ENCODE measurements at regions of chr21 and their contacts with region 1.

Region 1: DNA sequence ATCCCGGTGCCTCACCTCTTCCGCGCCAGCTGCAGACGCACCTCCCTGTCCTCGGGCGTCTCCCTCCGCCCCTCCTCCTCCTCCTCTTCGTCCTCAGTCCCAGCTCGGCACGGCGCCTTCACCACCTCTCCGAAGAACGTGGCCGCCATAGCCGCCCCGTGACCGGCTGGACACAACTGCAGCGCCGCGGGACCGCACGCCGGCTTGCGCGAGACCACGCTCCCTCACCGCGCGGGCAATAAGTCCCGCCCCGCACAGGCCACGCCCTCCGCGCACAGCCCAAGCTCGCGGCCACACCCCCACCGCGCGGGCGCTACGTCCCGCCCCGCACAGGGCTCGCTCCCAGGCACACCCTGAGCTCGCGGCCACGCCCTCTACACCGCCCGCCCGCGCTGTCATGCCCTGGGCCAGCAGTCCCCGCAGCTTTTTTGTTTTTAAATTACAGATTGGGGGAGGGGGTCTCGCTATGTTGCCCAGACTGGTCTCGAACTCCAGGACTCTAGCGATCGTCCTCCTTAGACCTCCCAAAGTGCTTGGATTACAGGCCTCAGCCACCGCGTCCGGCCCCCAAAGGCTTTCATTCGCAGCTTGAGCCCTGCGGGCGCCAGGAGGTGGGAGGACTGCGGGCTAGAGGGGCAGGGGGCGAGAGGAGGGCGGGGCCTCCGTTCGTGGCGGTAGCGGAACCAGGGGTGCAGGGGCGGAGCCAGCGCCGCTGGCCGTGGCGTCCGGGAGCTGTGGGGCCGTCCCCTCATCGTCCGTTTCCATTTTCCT is at the start of gene PSMG1:
- DNase-seq: peak; percentile 90
- CTCF ChIP-seq: no peak

Region 2: GRCh38 chr21:39388038-39388810 is 204.8 kb after region 1 on chr21:
- in situ Hi-C with region 1: loop called (anchors 25 kb)
- DNase-seq: peak; percentile 93
- CTCF ChIP-seq: peak; percentile 97

Region 3: DNA sequence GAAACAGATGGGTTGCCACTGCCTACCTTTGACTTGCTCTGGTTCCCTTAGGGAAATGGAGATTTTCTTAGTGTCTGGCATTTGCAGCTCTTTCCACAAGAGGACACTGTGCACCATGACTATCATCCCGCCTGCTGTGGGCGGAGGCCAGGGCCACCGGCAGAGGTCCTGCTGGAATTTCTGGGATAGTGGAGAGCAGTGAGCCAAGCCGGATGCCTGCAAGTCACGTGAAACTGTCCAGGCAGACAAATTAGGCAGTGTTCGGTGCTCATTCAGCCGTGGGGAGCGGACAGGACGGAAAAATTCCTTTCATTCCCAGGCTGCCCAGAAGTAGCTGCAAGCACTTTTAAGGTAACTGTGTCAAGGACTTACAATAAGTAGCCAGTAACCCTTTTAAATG is 605.0 kb after region 1 on chr21:
- in situ Hi-C with region 1: no loop called
- DNase-seq: no peak
- CTCF ChIP-seq: no peak

Measured in GM13976 (cell line).